HepG2 (cell line): ENCODE measurements at regions of chr11 and their contacts with region 1.

Region 1: DNA sequence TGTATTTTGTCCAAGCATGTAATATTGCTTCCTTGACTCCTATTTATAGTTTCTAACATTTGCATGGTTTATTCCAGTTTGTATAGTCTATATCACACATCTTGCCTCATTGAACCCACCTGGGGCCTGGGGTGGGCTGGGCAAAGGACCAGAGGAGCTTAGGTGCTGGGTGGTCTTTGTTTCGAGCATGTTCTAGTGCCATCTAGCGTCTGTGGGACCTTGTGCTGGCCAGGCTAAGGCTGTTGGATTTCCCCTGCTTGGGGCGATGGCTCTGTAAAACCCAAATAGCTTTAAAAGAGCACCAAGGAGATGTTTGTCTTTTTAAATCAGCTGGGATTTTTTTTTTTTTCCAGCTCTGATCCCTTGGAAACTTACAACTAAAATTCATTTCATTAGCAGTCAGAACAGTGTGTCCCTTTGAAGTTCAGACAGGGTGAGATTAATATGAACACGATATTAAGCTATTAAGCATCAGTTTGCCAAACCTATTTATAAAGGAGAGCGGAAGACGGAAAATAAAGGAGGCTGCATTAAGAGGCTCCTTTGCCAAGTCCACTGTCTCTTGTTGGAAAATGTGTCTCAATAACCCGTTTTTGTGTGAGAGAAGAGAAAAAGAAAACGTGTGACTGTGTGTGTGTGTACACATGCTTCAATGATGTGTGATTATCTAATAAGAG is 157.4 kb downstream of the COMMD9 start:
- DNase-seq: peak; percentile 20
- ATAC-seq: peak; percentile 82
- H3K4me3 ChIP-seq: no peak overlapping the region
- H3K27ac ChIP-seq: no peak overlapping the region
- H3K4me1 ChIP-seq: no peaks in the 10 kb centered on the region
- H3K27me3 ChIP-seq: peaks cover 6 to 14% of the 10 kb centered on the region in 2 experiments; a peak in 3 of 5 replicates
- CTCF ChIP-seq: peak; percentile 81
- EP300 ChIP-seq: no peak
- POLR2A ChIP-seq: no peak
- RAD21 ChIP-seq: no peak

Region 2: GRCh38 chr11:35714882-35715627 is 416.8 kb before region 1 on chr11:
- CTCF ChIA-PET with region 1: no interaction called
- POLR2A ChIA-PET with region 1: no interaction called
- in situ Hi-C with region 1: no loop called
- intact Hi-C with region 1: loop called (anchors 10 kb)
- DNase-seq: no peak
- ATAC-seq: no peak
- H3K4me3 ChIP-seq: no peak overlapping the region
- H3K27ac ChIP-seq: no peak overlapping the region
- H3K4me1 ChIP-seq: no peaks in the 10 kb centered on the region
- H3K27me3 ChIP-seq: no peaks in the 10 kb centered on the region
- CTCF ChIP-seq: no peak
- EP300 ChIP-seq: no peak
- POLR2A ChIP-seq: no peak
- RAD21 ChIP-seq: no peak